ENCODE measurements at regions of chr10 and their contacts with region 1.

Region 1: DNA sequence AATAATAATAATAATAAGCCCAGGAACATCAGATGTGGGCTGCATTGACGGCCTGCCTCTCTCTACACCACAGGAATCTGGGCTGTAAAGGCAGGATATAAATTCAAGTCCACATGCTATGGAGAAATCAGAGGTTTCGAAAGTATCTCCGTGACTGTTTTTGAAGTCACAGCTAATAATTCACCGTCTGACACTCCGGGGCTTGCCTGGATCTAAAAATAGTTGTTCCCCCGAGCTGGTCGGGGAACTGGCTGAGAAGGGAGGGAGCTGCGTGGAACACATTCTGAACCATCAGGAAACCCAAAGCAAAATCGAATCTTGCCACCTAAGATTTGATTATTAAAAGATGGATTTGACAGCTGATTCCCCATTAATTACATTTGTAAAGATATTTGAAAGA is 35.4 kb downstream of the KLF6 start:
- DNase-seq: peak in 1 of 2 experiments; percentile 49
- H3K4me3 ChIP-seq: no peak overlapping the region
- H3K4me3 Mint-ChIP-seq: no peak overlapping the region
- H3K27ac Mint-ChIP-seq: no peak overlapping the region
- H3K4me1 ChIP-seq: peaks cover 34% of the 10 kb centered on the region
- H3K4me1 Mint-ChIP-seq: peaks cover 44% of the 10 kb centered on the region
- H3K27me3 ChIP-seq: no peaks in the 10 kb centered on the region
- H3K27me3 Mint-ChIP-seq: no peaks in the 10 kb centered on the region
- CTCF ChIP-seq: no peak

Region 2: DNA sequence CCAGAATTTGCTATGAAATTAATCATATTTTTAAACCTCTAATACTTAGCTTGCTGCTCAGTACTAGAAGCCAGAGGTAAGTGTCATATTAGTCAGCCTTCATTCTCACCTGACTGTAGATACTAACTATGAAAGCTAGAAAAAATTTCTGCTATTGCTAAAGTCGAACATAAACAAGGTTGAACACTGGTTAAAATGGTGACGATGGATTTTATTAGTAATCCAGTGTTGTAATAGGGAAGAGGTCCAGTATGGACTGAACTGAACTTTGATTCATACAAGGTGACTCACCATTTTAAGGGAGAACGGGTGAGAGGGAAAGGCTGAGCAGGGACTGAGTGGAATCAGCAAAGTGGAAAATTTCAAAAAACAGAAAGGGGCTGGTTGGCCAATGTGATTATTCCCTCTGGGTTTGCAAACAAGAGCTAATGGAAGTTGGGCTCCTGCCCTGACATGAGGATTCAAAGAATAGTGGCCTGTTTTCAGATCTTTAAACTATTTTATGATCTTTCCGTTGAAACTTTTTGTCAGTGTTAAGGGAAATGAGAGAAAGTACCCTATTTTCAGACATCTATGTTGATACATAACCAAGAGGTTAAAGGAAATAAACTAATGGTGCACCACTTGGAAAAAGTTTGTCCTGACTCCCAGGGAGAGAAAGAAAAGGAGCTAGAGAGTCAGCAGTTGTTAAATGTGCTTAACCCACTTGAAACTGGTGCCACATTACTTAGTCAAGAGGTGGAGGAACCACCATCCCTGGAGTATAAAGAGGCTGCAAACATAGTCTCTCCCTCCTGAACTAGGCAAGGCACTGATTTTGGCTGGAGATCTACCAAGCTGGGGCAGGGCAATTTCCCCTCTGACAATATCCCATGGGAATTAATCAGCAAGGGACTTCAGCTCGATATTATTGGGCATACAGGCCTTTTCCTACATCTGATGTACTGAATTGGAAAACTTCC is 1198.3 kb after region 1 on chr10:
- CTCF ChIA-PET with region 1: no interaction called
- POLR2A ChIA-PET with region 1: interaction called, 11 read pairs
- intact Hi-C with region 1: no loop called
- DNase-seq: peak; percentile 63 to 69
- H3K4me3 ChIP-seq: no peak overlapping the region
- H3K4me3 Mint-ChIP-seq: peak overlapping the region; percentile 42
- H3K27ac Mint-ChIP-seq: peak overlapping the region; percentile 85
- H3K4me1 ChIP-seq: peaks cover 51% of the 10 kb centered on the region
- H3K4me1 Mint-ChIP-seq: peaks cover 48% of the 10 kb centered on the region
- H3K27me3 ChIP-seq: no peaks in the 10 kb centered on the region
- H3K27me3 Mint-ChIP-seq: no peaks in the 10 kb centered on the region
- CTCF ChIP-seq: no peak

Measured in Caco-2 (cell line).